Activated T-helper 1 cell treated with anti-CD3 and anti-CD28 coated beads, Interleukin-12 subunit alpha, Interleukin-12 subunit beta, Interleukin-2, Interleukin-4 antibody, amounts not matched to agents 30 ng/mL and 10 ng/mL and 1 ng/mL, durations not matched to agents 14 hours and 24 hours and 36 hours (primary cell): ENCODE measurements at regions of chr6 and their contacts with region 1.

Region 1: GRCh38 chr6:33317669-33318425 is at the start of gene ZBTB22:
- DNase-seq: peak; percentile 92
- H3K4me3 Mint-ChIP-seq: peak within 1 kb of the TSS; percentile 97
- H3K27ac Mint-ChIP-seq: peak within 1 kb of the TSS; percentile 94
- H3K4me1 Mint-ChIP-seq: peaks cover 74% of the 10 kb centered on the region
- H3K27me3 Mint-ChIP-seq: no peaks in the 10 kb centered on the region
- total RNA-seq, gene ZBTB22: 12.5 and 14.7 TPM in 2 replicates

Region 2: GRCh38 chr6:33276864-33277662 is 40.8 kb before region 1 on chr6 and contains the start of gene B3GALT4:
- intact Hi-C with region 1: loop called (anchors 1 kb)
- DNase-seq: peak; percentile 75
- H3K4me3 Mint-ChIP-seq: peak within 1 kb of the TSS; percentile 97
- H3K27ac Mint-ChIP-seq: peak within 1 kb of the TSS; percentile 91
- H3K4me1 Mint-ChIP-seq: peaks cover 56% of the 10 kb centered on the region
- H3K27me3 Mint-ChIP-seq: no peaks in the 10 kb centered on the region
- total RNA-seq, gene B3GALT4: 4.4 and 5.6 TPM in 2 replicates

Region 3: GRCh38 chr6:33299237-33299944 is 18.5 kb before region 1 on chr6:
- intact Hi-C with region 1: loop called (anchors 1 kb)
- DNase-seq: peak; percentile 92
- H3K4me3 Mint-ChIP-seq: peak overlapping the region; percentile 95
- H3K27ac Mint-ChIP-seq: peak overlapping the region; percentile 99
- H3K4me1 Mint-ChIP-seq: peaks cover 38% of the 10 kb centered on the region
- H3K27me3 Mint-ChIP-seq: no peaks in the 10 kb centered on the region

Region 4: DNA sequence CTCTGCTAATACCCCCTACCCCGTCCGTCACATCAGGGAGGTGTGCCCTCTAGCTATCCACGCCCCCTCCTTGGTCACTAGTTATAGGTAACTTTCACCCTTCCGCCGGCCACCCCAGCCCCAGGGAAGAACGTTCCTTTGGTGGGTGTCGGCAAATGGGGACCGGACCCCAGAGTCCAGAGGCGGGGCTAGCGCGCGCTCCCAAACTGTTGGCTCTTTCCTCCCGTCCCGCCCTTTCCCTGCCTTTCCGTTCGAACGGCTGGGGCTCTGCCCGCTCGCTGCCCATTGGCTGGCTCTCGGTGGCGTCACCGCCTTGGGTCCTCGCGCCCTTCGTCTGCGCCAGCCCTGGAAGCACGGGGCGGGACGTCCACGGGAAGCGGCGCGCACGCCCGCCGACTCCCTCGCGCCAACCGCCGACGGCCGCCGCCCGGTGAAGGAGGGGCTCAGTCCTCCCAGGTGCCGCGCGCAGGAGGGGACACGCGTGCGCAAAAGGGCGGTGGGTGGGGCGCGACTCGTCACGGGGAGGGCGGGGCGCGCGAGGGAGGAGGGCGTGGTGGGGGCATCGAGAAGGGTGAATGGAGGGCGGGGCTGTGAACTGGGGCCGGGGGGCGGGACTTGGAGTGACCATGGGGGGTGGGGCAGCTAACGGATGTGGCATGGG is 92.3 kb after region 1 on chr6:
- intact Hi-C with region 1: loop called (anchors 1 kb)
- DNase-seq: peak; percentile 99
- H3K4me3 Mint-ChIP-seq: peak overlapping the region; percentile 91
- H3K27ac Mint-ChIP-seq: peak overlapping the region; percentile 96
- H3K4me1 Mint-ChIP-seq: peaks cover 50% of the 10 kb centered on the region
- H3K27me3 Mint-ChIP-seq: no peaks in the 10 kb centered on the region

Region 5: GRCh38 chr6:33570806-33571636 is 253.2 kb after region 1 on chr6:
- intact Hi-C with region 1: loop called (anchors 2 kb)
- DNase-seq: peak; percentile 91
- H3K4me3 Mint-ChIP-seq: peak overlapping the region; percentile 83
- H3K27ac Mint-ChIP-seq: peak overlapping the region; percentile 99
- H3K4me1 Mint-ChIP-seq: peaks cover 62% of the 10 kb centered on the region
- H3K27me3 Mint-ChIP-seq: no peaks in the 10 kb centered on the region